Activated CD4-positive, alpha-beta memory T cell treated with anti-CD3 and anti-CD28 coated beads, Interleukin-2, amount 10 ng/mL, durations not matched to agents 7 days and 5 days (primary cell): ENCODE measurements at regions of chr11 and their contacts with region 1.

Region 1: DNA sequence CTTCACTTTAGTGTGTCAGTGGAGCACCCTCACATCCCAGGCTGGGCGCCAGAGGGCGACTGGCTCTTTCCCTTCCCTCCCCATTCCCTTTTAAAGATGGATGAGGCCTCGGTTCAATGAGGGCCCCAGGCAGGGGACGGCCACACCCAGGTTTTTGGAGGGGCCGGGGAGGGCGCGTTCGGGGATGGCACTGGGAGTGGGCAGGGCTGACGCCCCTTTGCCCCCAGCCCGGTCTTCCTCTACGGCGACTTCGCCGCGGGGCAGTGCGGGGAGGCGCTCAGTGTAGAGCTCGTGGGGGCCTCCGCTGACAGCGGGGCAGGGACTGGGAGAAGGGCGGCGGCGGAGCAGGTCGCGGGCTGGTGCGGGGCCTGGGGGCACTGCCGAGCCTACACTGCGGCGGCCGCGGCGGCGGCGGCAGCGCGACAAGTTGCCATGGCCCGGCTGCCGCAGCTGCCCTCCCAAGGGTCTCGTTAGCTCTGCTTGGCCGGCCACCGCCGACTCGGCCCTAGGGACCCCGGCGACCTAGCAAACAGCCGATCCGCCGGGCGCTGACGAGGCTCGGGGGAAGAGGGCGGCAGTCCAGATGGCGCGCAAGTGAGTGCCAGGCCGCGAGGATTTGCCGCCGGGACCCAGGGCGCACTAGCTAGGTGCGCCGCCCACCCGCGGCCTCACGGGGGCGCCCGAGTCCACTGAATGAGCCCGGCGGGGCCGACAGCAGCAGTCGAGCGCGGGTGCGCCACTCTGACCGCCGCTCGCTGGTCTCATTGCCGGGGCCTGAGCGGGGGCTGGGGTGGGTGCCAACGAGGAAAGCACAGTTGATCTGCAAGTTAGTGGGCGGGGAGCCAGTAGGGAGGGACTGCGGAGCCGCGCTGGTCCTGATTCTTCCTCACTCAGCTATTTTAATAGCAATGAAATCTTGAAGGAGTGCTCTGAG is 92.7 kb downstream of the RRM1 start:
- DNase-seq: peak; percentile 89
- H3K4me3 Mint-ChIP-seq: peak overlapping the region; percentile 77
- H3K27ac Mint-ChIP-seq: no peak overlapping the region
- H3K4me1 Mint-ChIP-seq: peaks cover 26% of the 10 kb centered on the region
- H3K27me3 Mint-ChIP-seq: peaks cover 6% of the 10 kb centered on the region

Region 2: GRCh38 chr11:3709977-3710376 is 477.3 kb before region 1 on chr11:
- CTCF ChIA-PET with region 1: no interaction called
- POLR2A ChIA-PET with region 1: no interaction called
- DNase-seq: no peak
- H3K4me3 Mint-ChIP-seq: no peak overlapping the region
- H3K27ac Mint-ChIP-seq: no peak overlapping the region
- H3K4me1 Mint-ChIP-seq: peaks cover 2% of the 10 kb centered on the region
- H3K27me3 Mint-ChIP-seq: no peaks in the 10 kb centered on the region

Region 3: DNA sequence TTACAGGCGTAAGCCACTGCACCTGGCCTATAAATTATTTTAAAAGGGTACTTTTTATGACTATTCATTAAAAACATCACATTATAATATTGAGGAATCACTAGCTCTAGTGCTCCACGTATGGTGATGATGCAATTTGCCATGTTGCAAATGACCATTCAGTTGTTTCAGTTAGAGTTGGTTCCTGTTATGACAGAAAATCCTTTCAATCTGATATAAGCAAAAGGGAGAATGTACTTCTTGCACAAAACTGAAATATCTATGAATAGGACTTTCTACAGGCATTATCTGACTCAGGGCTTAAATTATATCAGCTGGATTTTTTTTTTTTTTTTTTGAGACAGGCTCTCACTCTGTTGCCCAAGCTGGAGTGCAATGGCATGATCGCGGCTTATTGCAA is 138.3 kb before region 1 on chr11:
- CTCF ChIA-PET with region 1: no interaction called
- POLR2A ChIA-PET with region 1: no interaction called
- DNase-seq: no peak
- H3K4me3 Mint-ChIP-seq: no peak overlapping the region
- H3K27ac Mint-ChIP-seq: no peak overlapping the region
- H3K4me1 Mint-ChIP-seq: peaks cover 4% of the 10 kb centered on the region
- H3K27me3 Mint-ChIP-seq: no peaks in the 10 kb centered on the region

Region 4: DNA sequence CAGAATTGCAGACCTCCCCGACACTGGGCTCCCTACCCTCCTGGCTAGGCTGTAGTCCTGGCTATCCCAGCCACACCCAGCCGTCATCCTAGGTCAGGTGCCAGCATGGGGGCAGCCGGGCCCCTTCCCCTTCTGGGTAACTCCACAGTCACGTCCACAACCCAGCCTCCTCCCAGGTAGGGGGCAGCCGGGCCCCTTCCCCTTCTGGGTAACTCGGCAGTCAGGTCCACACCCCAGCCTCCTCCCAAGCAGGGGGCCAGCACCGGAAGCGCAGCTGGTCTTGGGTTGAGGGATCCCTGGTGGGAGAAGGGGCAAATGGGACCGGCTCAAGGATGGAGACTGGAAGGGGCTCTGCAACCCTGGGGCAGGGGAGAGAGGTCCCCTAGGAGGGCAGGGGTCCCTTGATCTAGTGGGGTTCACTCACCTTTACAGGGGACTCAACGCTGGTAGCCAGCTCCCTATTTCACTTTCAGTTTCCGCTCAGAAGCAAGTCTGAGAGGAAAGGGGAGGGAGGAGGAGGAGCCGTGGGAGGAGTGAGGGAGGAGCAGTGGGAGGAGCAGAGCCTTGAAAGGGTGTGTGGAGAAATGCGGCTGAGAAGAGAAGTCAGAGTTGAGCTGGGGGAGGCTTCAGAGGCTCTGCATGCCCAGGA is 206.0 kb after region 1 on chr11 and contains the start of gene TRIM21:
- CTCF ChIA-PET with region 1: interaction called, 16 read pairs
- POLR2A ChIA-PET with region 1: interaction called, 3 read pairs
- DNase-seq: peak; percentile 93
- H3K4me3 Mint-ChIP-seq: peak within 1 kb of the TSS; percentile 89
- H3K27ac Mint-ChIP-seq: peak within 1 kb of the TSS; percentile 84
- H3K4me1 Mint-ChIP-seq: peaks cover 43% of the 10 kb centered on the region
- H3K27me3 Mint-ChIP-seq: peaks cover 8% of the 10 kb centered on the region
- total RNA-seq, gene TRIM21: 75.9 to 80.0 TPM

Region 5: GRCh38 chr11:4490827-4491226 is 303.5 kb after region 1 on chr11:
- CTCF ChIA-PET with region 1: interaction called, 73 read pairs
- POLR2A ChIA-PET with region 1: no interaction called
- DNase-seq: no peak
- H3K4me3 Mint-ChIP-seq: no peak overlapping the region
- H3K27ac Mint-ChIP-seq: no peak overlapping the region
- H3K4me1 Mint-ChIP-seq: peaks cover 5% of the 10 kb centered on the region
- H3K27me3 Mint-ChIP-seq: peaks cover 30% of the 10 kb centered on the region

Region 6: GRCh38 chr11:4539603-4540219 is 352.4 kb after region 1 on chr11:
- CTCF ChIA-PET with region 1: interaction called, 125 read pairs
- POLR2A ChIA-PET with region 1: no interaction called
- DNase-seq: peak; percentile 61
- H3K4me3 Mint-ChIP-seq: no peak overlapping the region
- H3K27ac Mint-ChIP-seq: no peak overlapping the region
- H3K4me1 Mint-ChIP-seq: no peaks in the 10 kb centered on the region
- H3K27me3 Mint-ChIP-seq: peaks cover 13% of the 10 kb centered on the region

Region 7: GRCh38 chr11:4636962-4637661 is 449.8 kb after region 1 on chr11 and contains the start of gene OR51D1:
- CTCF ChIA-PET with region 1: interaction called, 21 read pairs
- POLR2A ChIA-PET with region 1: no interaction called
- DNase-seq: peak; percentile 70
- H3K4me3 Mint-ChIP-seq: no peak within 1 kb of the TSS
- H3K27ac Mint-ChIP-seq: no peak within 1 kb of the TSS
- H3K4me1 Mint-ChIP-seq: no peaks in the 10 kb centered on the region
- H3K27me3 Mint-ChIP-seq: peaks cover 13% of the 10 kb centered on the region
- total RNA-seq, gene OR51D1: not detected